Endothelial cell of umbilical vein (primary cell): ENCODE measurements at regions of chr6 and their contacts with region 1.

Region 1: DNA sequence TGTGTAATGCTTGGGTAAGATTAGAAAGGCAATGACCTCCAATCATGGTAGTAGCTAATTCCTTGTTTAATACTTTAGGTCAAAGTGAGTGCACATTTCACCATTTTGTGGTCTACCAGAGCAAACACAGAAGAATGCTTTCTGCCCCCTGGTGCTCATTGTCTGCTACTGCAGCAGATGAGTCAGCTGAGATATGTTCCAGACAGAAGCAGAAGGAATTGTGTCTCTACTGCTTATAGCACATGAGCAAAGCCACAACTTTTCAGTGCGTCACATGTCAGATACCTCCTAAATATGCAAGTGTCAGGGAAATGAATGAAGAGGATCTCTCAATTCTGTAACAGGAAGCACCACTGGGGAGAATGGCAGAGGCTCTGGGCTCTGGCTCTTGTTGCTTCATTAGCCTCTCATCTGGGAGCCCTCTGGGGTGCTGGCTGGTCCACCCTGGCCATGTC is 308.9 kb downstream of the ALDH8A1 start:
- DNase-seq: peak; percentile 84
- H3K4me3 ChIP-seq: no peak overlapping the region
- H3K27ac ChIP-seq: peak overlapping the region; percentile 6
- H3K4me1 ChIP-seq: no peaks in the 10 kb centered on the region
- H3K27me3 ChIP-seq: no peaks in the 10 kb centered on the region
- CTCF ChIP-seq: peak; percentile 86 to 94
- POLR2A ChIP-seq: no peak

Region 2: DNA sequence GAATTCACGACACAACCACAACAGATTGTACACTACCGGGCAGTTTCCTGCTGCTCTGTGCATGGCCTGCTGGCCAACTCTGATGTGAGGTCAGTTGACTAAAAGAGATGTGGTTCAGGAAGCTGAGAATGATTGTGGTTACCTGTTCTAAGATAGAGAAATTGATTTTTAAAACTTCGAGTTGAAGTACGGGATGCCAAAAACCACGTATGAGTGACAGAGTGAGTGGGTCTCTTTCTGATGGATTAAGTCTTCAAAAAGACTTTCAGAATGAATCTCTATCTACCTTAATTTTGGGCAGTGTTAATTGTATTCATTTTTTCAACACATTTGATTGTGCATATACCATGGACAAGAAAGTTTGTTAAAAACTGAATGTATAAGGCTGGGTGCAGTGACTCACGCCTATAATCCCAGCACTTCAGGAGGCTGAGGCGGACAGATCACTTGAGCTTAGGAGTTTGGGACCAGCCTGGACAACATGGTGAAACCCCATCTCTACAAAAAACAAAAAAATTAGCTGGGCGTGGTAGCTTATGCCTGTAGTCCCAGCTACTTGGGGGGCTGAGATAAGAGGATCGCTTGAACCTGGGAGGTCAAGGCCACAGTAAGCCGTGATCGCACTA is 444.3 kb before region 1 on chr6:
- CTCF ChIA-PET with region 1: interaction called, 11 read pairs
- POLR2A ChIA-PET with region 1: no interaction called
- dilution Hi-C with region 1: no loop called
- intact Hi-C with region 1: no loop called
- DNase-seq: no peak
- H3K4me3 ChIP-seq: no peak overlapping the region
- H3K27ac ChIP-seq: no peak overlapping the region
- H3K4me1 ChIP-seq: no peaks in the 10 kb centered on the region
- H3K27me3 ChIP-seq: no peaks in the 10 kb centered on the region
- CTCF ChIP-seq: no peak
- POLR2A ChIP-seq: no peak

Region 3: GRCh38 chr6:134422426-134423231 is 218.4 kb before region 1 on chr6:
- CTCF ChIA-PET with region 1: interaction called, 27 read pairs
- POLR2A ChIA-PET with region 1: no interaction called
- dilution Hi-C with region 1: no loop called
- intact Hi-C with region 1: loop called (anchors 1 kb)
- DNase-seq: peak; percentile 81
- H3K4me3 ChIP-seq: no peak overlapping the region
- H3K27ac ChIP-seq: peak overlapping the region; percentile 90
- H3K4me1 ChIP-seq: peaks cover 68% of the 10 kb centered on the region
- H3K27me3 ChIP-seq: no peaks in the 10 kb centered on the region
- CTCF ChIP-seq: no peak
- POLR2A ChIP-seq: peak; percentile 61

Region 4: DNA sequence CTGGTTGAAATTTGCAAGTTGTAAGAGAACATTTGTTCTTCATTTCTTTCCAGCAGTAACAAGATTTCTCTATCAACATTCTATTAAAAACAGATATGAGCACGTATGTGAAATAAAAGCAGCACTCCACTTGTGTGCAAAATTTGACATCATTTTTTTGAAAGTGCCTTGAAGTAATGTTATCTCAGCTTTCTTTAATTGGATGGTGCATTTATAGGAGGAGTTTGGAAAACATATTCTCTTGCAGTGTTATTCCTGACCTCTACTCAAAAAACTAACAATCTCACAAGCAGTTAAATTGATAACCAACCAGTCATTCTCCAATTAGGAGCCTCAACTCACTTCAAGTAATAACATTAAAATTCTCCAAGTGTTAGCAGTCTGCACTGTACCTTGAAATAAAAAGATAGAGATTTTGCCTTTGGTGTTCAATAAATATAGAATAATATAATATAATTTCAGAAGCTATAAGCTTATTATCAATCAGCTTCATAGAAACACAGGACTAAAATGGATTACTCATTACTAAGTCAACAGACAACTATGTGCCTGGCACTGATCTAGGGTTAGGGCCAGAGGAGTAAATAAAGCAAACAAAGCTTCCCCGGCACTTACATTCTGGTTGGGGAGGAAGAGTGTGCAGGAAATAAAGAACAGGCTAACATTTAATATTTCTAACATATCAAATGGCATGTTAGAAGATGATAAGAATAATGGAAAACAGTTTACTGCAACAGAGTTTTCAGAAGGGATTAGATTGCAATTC is 174.1 kb before region 1 on chr6:
- CTCF ChIA-PET with region 1: interaction called, 11 read pairs
- POLR2A ChIA-PET with region 1: no interaction called
- dilution Hi-C with region 1: no loop called
- intact Hi-C with region 1: no loop called
- DNase-seq: peak; percentile 43
- H3K4me3 ChIP-seq: no peak overlapping the region
- H3K27ac ChIP-seq: no peak overlapping the region
- H3K4me1 ChIP-seq: peaks cover 13% of the 10 kb centered on the region
- H3K27me3 ChIP-seq: no peaks in the 10 kb centered on the region
- CTCF ChIP-seq: no peak
- POLR2A ChIP-seq: no peak

Region 5: GRCh38 chr6:134551245-134551960 is 89.6 kb before region 1 on chr6:
- CTCF ChIA-PET with region 1: interaction called, 12 read pairs
- POLR2A ChIA-PET with region 1: no interaction called
- dilution Hi-C with region 1: no loop called
- intact Hi-C with region 1: loop called (anchors 1 kb)
- DNase-seq: peak; percentile 76
- H3K4me3 ChIP-seq: no peak overlapping the region
- H3K27ac ChIP-seq: peak overlapping the region; percentile 86
- H3K4me1 ChIP-seq: peaks cover 28% of the 10 kb centered on the region
- H3K27me3 ChIP-seq: no peaks in the 10 kb centered on the region
- CTCF ChIP-seq: no peak
- POLR2A ChIP-seq: no peak

Region 6: DNA sequence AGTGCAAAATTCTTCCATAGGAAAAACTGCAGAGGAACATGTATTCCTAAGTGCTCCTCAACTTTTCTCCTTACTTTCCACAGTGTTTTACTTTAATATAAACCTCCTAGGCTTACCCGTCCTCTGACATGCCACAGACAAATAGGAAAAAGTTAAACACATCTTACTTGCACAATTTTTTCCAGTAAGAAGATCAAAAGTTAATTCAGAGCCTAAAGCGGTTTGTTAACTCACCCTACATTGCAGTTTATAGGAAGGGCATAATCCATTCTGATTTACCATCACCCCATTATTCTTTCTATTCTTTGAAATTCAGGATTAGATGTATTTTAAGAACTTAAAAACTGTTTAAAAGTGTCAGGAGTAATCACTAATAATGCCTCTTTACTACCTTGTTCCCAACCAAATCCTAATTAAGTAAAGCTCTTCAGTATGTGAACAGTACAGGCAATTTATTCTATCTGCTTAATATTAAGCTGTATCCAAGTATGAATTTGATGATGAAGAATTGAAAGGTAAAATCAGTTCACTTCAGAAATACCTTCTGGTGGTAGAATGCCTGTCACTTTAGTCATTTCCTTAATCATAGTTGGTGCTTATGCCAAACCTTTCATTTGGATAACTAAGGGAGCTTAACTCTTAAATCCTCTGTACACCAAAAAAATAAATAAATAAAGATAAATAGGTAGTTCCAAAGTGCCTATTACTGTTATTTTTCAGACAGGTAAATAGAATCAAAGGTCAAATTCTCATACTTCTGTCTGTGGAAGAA is 16.9 kb after region 1 on chr6:
- CTCF ChIA-PET with region 1: interaction called, 16 read pairs
- POLR2A ChIA-PET with region 1: no interaction called
- dilution Hi-C with region 1: no loop called
- intact Hi-C with region 1: no loop called
- DNase-seq: peak; percentile 10
- H3K4me3 ChIP-seq: no peak overlapping the region
- H3K27ac ChIP-seq: no peak overlapping the region
- H3K4me1 ChIP-seq: peaks cover 4% of the 10 kb centered on the region
- H3K27me3 ChIP-seq: no peaks in the 10 kb centered on the region
- CTCF ChIP-seq: no peak
- POLR2A ChIP-seq: no peak